ENCODE measurements at regions of chr14 and their contacts with region 1.

Region 1: GRCh38 chr14:38079268-38079667 is 128.4 kb upstream of the SSTR1 start:
- DNase-seq: no peak
- H3K4me3 Mint-ChIP-seq: no peak overlapping the region
- H3K27ac Mint-ChIP-seq: peak overlapping the region; percentile 55
- H3K4me1 Mint-ChIP-seq: peaks cover 55% of the 10 kb centered on the region
- H3K27me3 Mint-ChIP-seq: no peaks in the 10 kb centered on the region

Region 2: GRCh38 chr14:37816135-37816534 is 263.1 kb before region 1 on chr14:
- CTCF ChIA-PET with region 1: no interaction called
- POLR2A ChIA-PET with region 1: no interaction called
- intact Hi-C with region 1: no loop called
- DNase-seq: no peak
- H3K4me3 Mint-ChIP-seq: no peak overlapping the region
- H3K27ac Mint-ChIP-seq: no peak overlapping the region
- H3K4me1 Mint-ChIP-seq: no peaks in the 10 kb centered on the region
- H3K27me3 Mint-ChIP-seq: peaks cover 2% of the 10 kb centered on the region

Region 3: GRCh38 chr14:38065106-38065762 is 14.0 kb before region 1 on chr14:
- CTCF ChIA-PET with region 1: interaction called, 3 read pairs
- POLR2A ChIA-PET with region 1: interaction called, 3 read pairs
- intact Hi-C with region 1: loop called (anchors 1 kb)
- DNase-seq: peak; percentile 77
- H3K4me3 Mint-ChIP-seq: peak overlapping the region; percentile 57
- H3K27ac Mint-ChIP-seq: peak overlapping the region; percentile 80
- H3K4me1 Mint-ChIP-seq: peaks cover 33% of the 10 kb centered on the region
- H3K27me3 Mint-ChIP-seq: no peaks in the 10 kb centered on the region

Region 4: DNA sequence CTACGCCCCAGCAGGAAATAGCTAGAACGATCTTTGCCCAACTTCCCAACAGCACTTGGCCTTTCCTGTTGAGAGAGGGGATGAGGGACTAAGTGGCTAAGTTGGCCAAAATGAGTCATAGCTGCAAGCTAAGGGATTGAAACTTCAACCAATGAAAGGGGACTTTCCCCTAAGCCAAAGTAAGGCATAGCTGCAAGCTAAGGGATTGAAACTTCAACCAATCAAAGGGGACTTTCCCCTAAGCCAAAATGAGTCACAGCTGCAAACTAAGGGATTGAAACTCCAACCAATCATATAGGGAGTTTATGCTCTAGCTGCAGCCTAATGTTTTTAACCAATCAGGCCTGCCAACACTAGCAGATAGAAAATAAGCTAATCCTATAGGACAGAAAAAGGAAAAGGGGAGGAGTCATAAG is 28.0 kb after region 1 on chr14:
- CTCF ChIA-PET with region 1: interaction called, 3 read pairs
- POLR2A ChIA-PET with region 1: no interaction called
- intact Hi-C with region 1: loop called (anchors 2 kb)
- DNase-seq: no peak
- H3K4me3 Mint-ChIP-seq: no peak overlapping the region
- H3K27ac Mint-ChIP-seq: no peak overlapping the region
- H3K4me1 Mint-ChIP-seq: peaks cover 14% of the 10 kb centered on the region
- H3K27me3 Mint-ChIP-seq: no peaks in the 10 kb centered on the region

Region 5: DNA sequence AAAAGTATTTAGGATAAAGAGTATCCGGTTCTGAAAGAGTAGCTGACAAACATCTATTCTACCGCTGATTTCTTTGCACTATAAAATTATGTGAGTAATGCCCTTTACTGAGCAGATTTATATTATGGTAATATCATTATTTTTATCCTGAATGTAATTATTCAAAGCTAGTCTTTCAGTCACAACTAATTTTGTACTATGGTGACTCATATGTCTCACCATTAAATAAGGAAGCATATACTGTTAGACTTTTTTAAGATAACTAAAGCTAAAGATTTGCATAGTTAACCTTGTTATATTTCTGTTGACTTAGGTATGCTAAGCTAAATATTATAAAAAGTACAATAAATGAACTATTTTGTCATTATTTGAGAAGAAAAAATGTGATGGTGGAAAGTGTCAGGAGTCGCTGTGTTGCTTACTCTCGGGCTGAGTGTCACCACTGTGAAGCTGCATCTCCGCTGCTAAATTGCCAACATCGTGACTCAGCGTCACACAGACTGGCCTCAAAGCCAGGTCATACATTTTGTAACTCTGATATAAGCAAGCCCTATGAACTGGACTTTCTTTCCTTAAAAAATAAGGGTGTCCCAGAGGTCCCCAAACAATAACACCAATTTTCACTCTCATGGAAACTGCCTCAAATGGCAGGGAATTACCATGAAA is 59.3 kb after region 1 on chr14:
- CTCF ChIA-PET with region 1: no interaction called
- POLR2A ChIA-PET with region 1: no interaction called
- intact Hi-C with region 1: no loop called
- DNase-seq: no peak
- H3K4me3 Mint-ChIP-seq: no peak overlapping the region
- H3K27ac Mint-ChIP-seq: no peak overlapping the region
- H3K4me1 Mint-ChIP-seq: peaks cover 6% of the 10 kb centered on the region
- H3K27me3 Mint-ChIP-seq: no peaks in the 10 kb centered on the region

Region 6: DNA sequence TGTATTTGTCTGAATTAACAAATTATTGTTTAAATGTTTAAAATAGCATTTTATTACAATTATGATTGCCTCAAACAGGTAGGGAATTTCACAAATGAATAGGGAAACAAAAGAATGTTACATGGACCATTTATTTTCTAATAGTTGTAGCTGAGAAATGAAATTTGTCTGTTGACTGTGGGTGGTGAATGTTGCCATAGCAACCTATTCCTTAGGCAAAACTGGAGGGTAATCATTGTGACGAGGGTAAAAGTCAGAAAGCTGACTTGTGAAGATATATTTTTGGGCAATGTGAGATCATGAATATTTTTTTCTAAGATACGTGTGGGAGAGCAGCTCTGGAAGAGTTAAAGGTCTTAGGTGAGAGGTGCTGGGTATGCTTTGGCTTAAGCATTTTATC is 200.8 kb after region 1 on chr14:
- CTCF ChIA-PET with region 1: no interaction called
- POLR2A ChIA-PET with region 1: no interaction called
- intact Hi-C with region 1: no loop called
- DNase-seq: no peak
- H3K4me3 Mint-ChIP-seq: no peak overlapping the region
- H3K27ac Mint-ChIP-seq: no peak overlapping the region
- H3K4me1 Mint-ChIP-seq: no peaks in the 10 kb centered on the region
- H3K27me3 Mint-ChIP-seq: peaks cover 11% of the 10 kb centered on the region

Measured in activated CD4-positive, alpha-beta memory T cell treated with anti-CD3 and anti-CD28 coated beads for 36 hours (primary cell).